Activated naive CD4-positive, alpha-beta T cell treated with anti-CD3 and anti-CD28 coated beads for 36 hours (primary cell): ENCODE measurements at regions of chr17 and their contacts with region 1.

Region 1: DNA sequence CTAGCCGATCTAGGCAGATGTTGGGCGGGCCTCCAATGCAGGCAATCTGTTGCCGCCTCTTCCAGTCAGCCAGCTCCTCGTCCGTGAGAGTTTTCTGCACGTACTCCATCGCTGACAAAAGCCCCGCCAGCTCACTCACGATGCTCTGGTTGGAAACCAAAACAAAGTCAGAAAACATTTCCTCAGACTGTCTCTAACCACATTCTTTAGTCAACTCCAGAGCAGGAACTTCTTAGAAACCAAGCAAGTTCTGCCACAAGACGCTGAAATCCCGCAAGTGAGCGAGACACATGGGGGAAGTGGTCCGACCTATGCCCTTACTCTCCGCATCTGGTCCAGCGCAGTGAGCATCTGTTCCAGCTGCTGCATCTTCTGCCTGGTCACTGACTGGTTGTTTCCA is 49.1 kb downstream of the STAT5A start:
- DNase-seq: peak; percentile 92
- H3K4me3 Mint-ChIP-seq: peak overlapping the region; percentile 43
- H3K27ac Mint-ChIP-seq: peak overlapping the region; percentile 90
- H3K4me1 Mint-ChIP-seq: peaks cover 84% of the 10 kb centered on the region
- H3K27me3 Mint-ChIP-seq: no peaks in the 10 kb centered on the region

Region 2: GRCh38 chr17:42322382-42323267 is 14.8 kb before region 1 on chr17:
- CTCF ChIA-PET with region 1: interaction called, 17 read pairs
- intact Hi-C with region 1: loop called (anchors 1 kb)
- DNase-seq: peak; percentile 99
- H3K4me3 Mint-ChIP-seq: peak overlapping the region; percentile 9
- H3K27ac Mint-ChIP-seq: peak overlapping the region; percentile 81
- H3K4me1 Mint-ChIP-seq: peaks cover 55% of the 10 kb centered on the region
- H3K27me3 Mint-ChIP-seq: no peaks in the 10 kb centered on the region

Region 3: GRCh38 chr17:42361781-42362186 is 24.3 kb after region 1 on chr17:
- CTCF ChIA-PET with region 1: interaction called, 4 read pairs
- intact Hi-C with region 1: loop called (anchors 2 kb)
- DNase-seq: peak; percentile 70
- H3K4me3 Mint-ChIP-seq: no peak overlapping the region
- H3K27ac Mint-ChIP-seq: peak overlapping the region; percentile 79
- H3K4me1 Mint-ChIP-seq: peaks cover 81% of the 10 kb centered on the region
- H3K27me3 Mint-ChIP-seq: no peaks in the 10 kb centered on the region

Region 4: DNA sequence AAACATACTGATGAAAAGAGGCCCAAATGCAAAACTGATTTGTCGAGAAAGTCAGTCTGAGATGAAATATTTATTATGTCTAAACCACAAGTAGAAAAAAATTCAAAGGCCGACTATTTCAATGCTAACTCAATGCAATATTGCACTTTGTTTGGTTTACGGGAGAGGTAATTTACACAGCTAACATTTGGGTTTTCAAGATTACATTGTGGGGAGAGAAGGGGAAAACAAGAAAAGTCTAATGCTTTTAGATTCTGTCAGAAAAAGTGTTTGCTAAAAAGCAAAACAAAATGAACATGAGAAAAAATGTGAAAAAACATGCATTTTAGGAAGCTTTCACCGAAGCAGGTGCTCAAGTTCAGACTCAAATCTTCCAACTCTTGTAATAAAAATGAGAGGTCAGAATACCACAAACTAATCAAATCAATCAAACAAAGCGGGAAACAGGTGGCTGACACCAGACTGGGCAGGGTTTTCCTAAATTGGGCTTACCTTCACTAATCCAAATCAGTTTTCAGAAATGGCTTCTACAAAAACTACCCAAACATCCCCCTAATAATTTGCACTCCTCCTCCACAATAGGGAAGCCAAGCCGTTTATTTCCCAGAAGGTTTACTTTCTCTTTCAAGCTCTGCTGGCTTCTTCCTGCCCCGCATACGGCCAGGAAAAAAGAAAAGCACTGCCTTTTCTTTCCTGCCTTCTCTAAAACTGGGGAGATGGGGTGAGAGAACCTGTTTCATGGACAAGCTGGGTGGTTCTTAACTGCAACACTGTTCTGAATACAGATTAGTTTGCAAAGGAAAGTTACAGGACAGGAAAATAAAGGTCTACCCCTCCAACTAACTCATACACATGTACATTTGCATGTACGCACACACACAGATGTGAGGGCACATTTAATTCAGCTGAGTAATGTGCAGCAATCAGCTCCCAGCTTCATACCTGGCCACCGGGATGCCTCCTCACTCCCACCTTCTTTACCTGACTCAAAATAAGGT is 41.5 kb after region 1 on chr17:
- CTCF ChIA-PET with region 1: interaction called, 3 read pairs
- intact Hi-C with region 1: loop called (anchors 1 kb)
- DNase-seq: peak; percentile 73
- H3K4me3 Mint-ChIP-seq: peak overlapping the region; percentile 63
- H3K27ac Mint-ChIP-seq: peak overlapping the region; percentile 95
- H3K4me1 Mint-ChIP-seq: peaks cover 90% of the 10 kb centered on the region
- H3K27me3 Mint-ChIP-seq: no peaks in the 10 kb centered on the region

Region 5: DNA sequence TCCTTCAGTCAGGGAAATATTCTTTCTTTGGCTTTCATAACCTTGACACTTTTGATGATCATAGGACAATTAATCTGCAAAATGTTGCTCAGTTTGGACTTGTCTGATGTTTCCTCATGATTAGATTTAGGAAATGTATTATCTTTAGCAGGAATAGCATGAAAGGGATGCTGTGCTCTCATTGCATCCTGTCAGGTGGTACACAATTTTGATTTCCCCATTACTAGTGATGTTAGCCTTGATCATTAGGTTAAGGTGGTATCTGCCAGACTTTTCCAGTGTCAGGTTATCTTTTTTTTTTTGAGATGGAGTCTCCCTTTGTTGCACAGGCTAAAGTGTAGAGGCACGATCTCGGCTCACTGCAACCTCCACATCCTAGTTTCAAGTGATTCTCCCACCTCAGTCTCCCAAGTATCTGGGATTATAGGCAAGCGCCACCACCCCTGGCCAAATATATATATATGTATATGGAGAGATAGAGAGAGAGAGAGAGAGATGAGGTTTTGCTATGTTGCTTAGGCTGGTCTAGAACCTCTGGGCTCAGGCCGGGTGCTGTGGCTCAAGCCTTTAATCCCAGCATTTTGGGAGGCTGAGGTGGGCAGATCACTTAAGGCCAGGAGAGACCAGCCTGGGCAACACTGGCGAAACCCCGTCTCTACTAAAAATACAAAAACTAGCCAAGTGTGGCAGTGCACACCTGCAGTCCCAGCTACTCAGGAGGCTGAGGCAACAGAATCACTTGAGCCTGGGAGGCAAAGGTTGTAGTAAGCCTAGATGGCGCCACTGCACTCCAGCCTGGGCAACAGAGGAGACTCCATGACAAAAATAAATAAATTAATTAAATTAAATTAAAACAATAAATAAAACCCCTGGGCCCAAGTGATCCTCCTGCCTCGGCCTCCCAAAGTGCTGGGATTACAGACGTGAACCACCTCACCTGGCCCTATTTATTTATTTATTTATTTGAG is 101.4 kb after region 1 on chr17:
- CTCF ChIA-PET with region 1: no interaction called
- intact Hi-C with region 1: no loop called
- DNase-seq: peak; percentile 74
- H3K4me3 Mint-ChIP-seq: no peak overlapping the region
- H3K27ac Mint-ChIP-seq: no peak overlapping the region
- H3K4me1 Mint-ChIP-seq: peaks cover 6% of the 10 kb centered on the region
- H3K27me3 Mint-ChIP-seq: no peaks in the 10 kb centered on the region

Region 6: DNA sequence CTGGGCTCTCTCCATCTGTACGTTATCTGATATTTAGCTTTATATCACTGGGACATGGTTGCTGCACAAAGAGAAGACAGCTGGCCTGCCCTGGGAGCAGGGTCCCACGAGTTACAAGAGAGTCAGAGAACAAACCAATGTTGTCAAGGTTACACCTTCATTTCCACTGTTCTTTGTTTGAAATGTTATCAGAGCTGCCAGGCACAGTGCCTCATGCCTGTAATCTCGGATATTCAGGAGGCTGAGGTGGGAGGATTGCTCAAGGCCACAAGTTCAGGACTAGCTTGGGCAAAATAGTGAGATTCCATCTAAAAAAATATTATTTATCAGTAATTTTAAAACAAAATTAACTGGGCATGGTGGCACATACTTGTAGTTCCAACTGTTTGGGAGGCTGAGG is 155.9 kb after region 1 on chr17:
- CTCF ChIA-PET with region 1: no interaction called
- intact Hi-C with region 1: no loop called
- DNase-seq: no peak
- H3K4me3 Mint-ChIP-seq: no peak overlapping the region
- H3K27ac Mint-ChIP-seq: no peak overlapping the region
- H3K4me1 Mint-ChIP-seq: peaks cover 2% of the 10 kb centered on the region
- H3K27me3 Mint-ChIP-seq: no peaks in the 10 kb centered on the region